Spleen (tissue), 13 donors: ENCODE measurements at regions of chr1 and their contacts with region 1.

Region 1: DNA sequence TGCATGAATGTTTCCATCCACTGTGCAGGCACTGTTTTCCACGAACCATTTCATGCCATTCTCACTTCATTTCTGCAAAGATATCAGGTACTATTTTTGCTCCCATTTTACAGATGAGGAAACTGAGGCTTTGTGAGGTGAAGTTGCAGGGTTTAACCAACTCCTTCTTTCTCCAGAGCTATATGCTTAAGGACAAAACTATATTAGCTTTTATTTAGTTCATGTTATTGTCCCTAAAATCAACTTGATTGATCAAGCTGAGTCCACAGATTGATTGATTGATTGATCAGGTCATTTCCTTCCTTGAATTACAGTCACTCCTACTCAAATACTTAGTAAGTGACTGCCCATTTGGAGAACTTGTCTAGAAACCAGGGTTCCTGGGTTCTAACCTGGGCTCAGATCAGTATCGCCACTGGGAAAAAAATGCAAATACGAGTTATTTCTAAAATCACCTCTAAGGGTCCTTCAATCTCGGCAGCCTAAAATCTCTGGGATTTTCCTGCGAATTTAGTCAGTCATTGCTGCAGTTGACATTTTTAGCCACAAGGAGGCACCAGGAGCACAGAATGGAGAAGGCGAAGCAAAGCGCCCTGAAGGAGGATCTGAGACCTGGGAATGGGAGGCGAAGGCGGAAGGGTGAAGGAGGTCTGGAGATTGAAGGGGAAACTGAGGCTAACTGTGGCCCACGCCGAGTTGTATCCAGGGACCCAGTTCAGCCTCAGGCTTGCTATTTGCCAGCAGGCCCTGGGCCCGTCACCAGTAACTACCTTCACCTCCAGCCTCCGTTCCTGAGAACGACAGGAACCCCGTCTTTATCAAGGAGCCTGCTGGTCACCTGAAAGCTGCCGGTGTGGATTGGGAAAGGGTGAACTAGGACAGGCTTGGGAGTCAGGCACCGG is 14.3 kb upstream of the MUL1 start:
- DNase-seq: peak; percentile 73
- H3K4me3 ChIP-seq: peak overlapping the region in 1 of 8 donors; percentile 35
- H3K27ac ChIP-seq: no peak overlapping the region
- H3K4me1 ChIP-seq: peaks cover 0 to 7% (median 6%) of the 10 kb centered on the region in 6 donors
- H3K27me3 ChIP-seq: peaks cover 0 to 21% (median 5%) of the 10 kb centered on the region in 7 donors
- CTCF ChIP-seq: peak; percentile 74 to 93 (median 82)
- POLR2A ChIP-seq: no peak

Region 2: GRCh38 chr1:20634594-20635084 is 112.4 kb after region 1 on chr1:
- intact Hi-C with region 1: loop called (anchors 5 kb)
- DNase-seq: no peak
- H3K4me3 ChIP-seq: peak overlapping the region; percentile 79 to 99 (median 96)
- H3K27ac ChIP-seq: peak overlapping the region in 7 of 8 donors; percentile 92 to 99 (median 96)
- H3K4me1 ChIP-seq: peaks cover 8 to 42% (median 19%) of the 10 kb centered on the region in 6 donors
- H3K27me3 ChIP-seq: no peaks in the 10 kb centered on the region
- CTCF ChIP-seq: no peak
- POLR2A ChIP-seq: no peak